IMR-90 (cell line): ENCODE measurements at regions of chr12 and their contacts with region 1.

Region 1: DNA sequence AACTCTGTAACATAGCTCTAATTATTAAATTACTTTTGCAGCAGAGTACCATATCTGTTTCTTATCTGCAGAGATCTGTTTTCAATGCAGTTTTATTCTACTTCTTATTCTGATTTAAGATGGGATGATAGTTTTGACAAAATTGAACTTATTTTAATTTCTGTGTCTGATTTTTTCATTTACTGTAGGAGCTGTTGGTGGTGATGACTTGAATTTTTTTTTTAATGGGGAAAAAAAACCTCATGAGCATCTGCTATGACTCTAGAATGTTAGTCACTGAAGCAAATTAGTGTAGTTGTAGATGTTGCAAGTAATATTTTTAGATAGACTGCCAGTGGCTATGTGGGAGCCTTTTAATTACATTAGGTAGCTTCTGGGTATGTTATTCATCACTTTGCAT is 23.4 kb downstream of the DNM1L start:
- DNase-seq: no peak
- ATAC-seq: peak; percentile 56
- H3K4me3 ChIP-seq: no peak overlapping the region
- H3K27ac ChIP-seq: no peak overlapping the region
- H3K4me1 ChIP-seq: peaks cover 4% of the 10 kb centered on the region; the same call in 1 of the 2 replicates
- H3K27me3 ChIP-seq: no peaks in the 10 kb centered on the region
- CTCF ChIP-seq: no peak
- POLR2A ChIP-seq: no peak
- RAD21 ChIP-seq: no peak

Region 2: DNA sequence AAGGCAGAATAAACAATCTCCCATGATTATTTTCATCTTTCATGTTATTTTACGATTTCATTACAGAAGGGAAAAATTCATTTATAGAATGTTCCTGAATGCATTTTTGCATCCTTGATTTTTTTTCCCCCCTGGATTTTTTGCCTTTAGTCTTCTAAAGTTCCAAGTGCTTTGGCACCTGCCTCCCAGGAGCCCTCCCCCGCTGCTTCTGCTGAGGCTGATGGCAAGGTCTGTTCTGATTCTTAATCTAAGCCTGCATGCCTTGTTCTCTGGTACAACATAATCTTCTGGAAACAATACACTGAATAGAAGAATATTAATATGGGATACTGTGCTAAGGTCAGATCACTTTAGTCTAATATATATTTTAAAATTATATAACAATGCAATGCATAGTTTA is 35.2 kb after region 1 on chr12:
- CTCF ChIA-PET with region 1: no interaction called
- POLR2A ChIA-PET with region 1: no interaction called
- dilution Hi-C with region 1: no loop called
- in situ Hi-C with region 1: no loop called
- intact Hi-C with region 1: loop called (anchors 5 kb)
- DNase-seq: no peak
- ATAC-seq: no peak
- H3K4me3 ChIP-seq: no peak overlapping the region
- H3K27ac ChIP-seq: no peak overlapping the region
- H3K4me1 ChIP-seq: no peaks in the 10 kb centered on the region
- H3K27me3 ChIP-seq: no peaks in the 10 kb centered on the region
- CTCF ChIP-seq: no peak
- POLR2A ChIP-seq: no peak
- RAD21 ChIP-seq: no peak